ENCODE measurements at regions of chr1 and their contacts with region 1.

Region 1: GRCh38 chr1:42335050-42335808 is at the start of gene FOXJ3:
- DNase-seq: peak; percentile 87 to 89
- ATAC-seq: peak; percentile 92
- H3K4me3 ChIP-seq: peak within 1 kb of the TSS; percentile 74 to 91 (median 76)
- H3K27ac ChIP-seq: peak within 1 kb of the TSS; percentile 87 to 98 (median 98)
- H3K4me1 ChIP-seq: peaks cover 31 to 34% of the 10 kb centered on the region in 2 donors
- H3K27me3 ChIP-seq: no peaks in the 10 kb centered on the region
- CTCF ChIP-seq: peak in 1 of 5 experiments; percentile 22
- POLR2A ChIP-seq: peak; percentile 82 to 86
- total RNA-seq, gene FOXJ3: 39.4 to 81.0 (median 56.3) TPM

Region 2: GRCh38 chr1:41673378-41673777 is 661.9 kb before region 1 on chr1:
- in situ Hi-C with region 1: no loop called
- intact Hi-C with region 1: no loop called
- DNase-seq: no peak
- ATAC-seq: no peak
- H3K4me3 ChIP-seq: no peak overlapping the region
- H3K27ac ChIP-seq: no peak overlapping the region
- H3K4me1 ChIP-seq: peaks cover 0 to 10% of the 10 kb centered on the region in 2 donors
- H3K27me3 ChIP-seq: no peaks in the 10 kb centered on the region
- CTCF ChIP-seq: no peak
- POLR2A ChIP-seq: no peak

Region 3: DNA sequence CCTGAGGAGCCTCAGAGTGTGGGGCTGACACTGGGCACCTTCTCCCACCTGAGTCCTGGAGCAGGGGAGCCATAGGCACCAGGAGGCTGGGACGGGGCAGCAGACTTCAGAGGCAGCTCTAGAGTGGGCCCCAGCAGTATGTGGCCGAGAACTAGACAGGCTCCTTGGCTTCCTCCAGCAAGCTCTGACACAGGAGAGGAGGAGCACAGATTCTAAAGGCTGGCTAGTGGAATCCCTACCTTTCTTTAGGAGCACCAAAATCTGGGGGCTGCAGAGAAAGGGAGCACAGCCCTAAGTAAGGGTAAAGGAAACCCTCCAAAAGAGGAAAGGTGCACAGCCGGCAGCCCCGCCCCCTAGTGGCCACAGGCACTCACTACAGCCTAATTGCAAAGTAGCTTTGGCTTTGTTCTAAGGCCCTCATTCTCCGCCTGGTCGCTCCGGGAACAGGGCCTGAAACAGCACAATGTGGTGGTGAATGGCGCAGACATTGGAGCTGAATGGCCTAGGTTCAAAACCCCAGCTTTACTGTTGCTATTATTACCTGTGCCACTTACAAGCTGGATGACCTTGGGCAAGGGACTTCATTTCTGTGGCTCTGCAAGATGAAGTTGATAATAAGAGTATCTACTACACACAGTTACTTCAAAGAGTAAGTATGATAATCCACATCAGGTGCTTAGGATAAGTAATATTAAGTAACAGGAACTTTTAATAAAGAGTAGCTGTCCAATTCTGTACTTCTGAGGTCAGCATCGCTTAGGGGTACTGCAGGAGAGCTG is 161.9 kb before region 1 on chr1:
- in situ Hi-C with region 1: no loop called
- intact Hi-C with region 1: loop called (anchors 2 kb)
- DNase-seq: peak in 1 of 2 donors; percentile 47
- ATAC-seq: peak; percentile 51 to 79
- H3K4me3 ChIP-seq: no peak overlapping the region
- H3K27ac ChIP-seq: peak overlapping the region; percentile 2 to 60 (median 39)
- H3K4me1 ChIP-seq: peaks cover 13 to 18% of the 10 kb centered on the region in 2 donors
- H3K27me3 ChIP-seq: no peaks in the 10 kb centered on the region
- CTCF ChIP-seq: peak; percentile 76 to 97 (median 91)
- POLR2A ChIP-seq: no peak

Region 4: DNA sequence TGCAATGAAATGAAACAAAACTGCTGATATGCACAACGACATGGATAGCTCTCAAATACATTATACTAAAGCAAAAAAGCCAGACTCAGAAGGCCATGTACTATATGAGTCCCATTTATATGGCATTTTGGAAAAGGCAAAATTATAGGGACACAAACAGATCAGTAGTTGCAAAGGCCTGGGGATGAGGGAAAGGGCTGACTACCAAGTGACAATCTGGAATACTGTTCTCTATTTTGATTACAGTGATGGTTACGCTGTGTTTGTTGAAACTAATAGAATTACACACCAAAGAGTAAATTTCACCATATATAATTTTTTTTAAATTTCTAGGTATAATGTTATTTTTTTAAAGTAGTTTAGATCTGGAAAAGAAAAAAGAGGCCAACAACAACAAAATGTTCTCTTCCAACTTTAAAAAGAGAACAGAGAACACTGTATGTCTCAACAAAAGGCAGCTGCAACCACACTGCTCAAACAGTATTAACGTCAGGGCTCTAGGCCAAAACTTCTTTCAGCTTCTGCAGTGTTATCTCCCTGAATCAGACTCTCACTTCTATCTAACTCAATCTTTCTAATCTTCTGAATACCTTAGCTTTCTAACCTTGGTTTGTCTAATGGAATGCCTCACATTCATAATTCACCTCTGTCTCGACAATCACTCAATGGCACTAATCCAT is 76.0 kb before region 1 on chr1:
- in situ Hi-C with region 1: no loop called
- intact Hi-C with region 1: loop called (anchors 2 kb)
- DNase-seq: peak; percentile 38 to 53
- ATAC-seq: peak; percentile 97 to 98
- H3K4me3 ChIP-seq: peak overlapping the region in 1 of 4 donors; percentile 18
- H3K27ac ChIP-seq: peak overlapping the region; percentile 59 to 84 (median 70)
- H3K4me1 ChIP-seq: peaks cover 45 to 51% of the 10 kb centered on the region in 2 donors
- H3K27me3 ChIP-seq: no peaks in the 10 kb centered on the region
- CTCF ChIP-seq: no peak
- POLR2A ChIP-seq: no peak

Region 5: DNA sequence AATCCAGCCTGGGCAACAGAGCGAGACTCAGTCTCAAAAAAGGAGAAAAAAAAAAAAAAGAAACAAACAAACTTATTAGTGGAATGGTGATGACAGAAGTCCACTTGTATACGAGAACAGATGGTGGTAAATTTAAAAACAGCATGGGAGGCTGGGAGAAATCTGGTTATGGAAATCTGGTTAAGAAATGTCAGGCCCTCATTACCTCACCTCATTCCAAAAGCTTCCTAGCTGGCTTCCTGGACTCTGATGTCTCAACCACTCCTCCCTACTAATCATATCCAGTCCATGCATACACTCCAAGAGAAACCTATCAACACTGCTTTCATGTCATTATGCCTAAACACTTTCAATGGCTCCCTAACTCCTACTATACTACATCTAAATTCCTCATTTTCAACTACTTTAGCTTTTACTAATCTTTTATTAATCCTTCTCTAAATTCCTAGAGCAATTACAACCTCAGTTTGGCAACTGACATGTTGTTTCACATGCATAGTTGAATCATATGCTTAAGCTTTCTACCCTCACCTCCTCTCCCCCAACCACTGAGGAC is 53.1 kb before region 1 on chr1:
- in situ Hi-C with region 1: no loop called
- intact Hi-C with region 1: loop called (anchors 1 kb)
- DNase-seq: no peak
- ATAC-seq: peak; percentile 62 to 95
- H3K4me3 ChIP-seq: no peak overlapping the region
- H3K27ac ChIP-seq: peak overlapping the region in 2 of 4 donors; percentile 24 to 33
- H3K4me1 ChIP-seq: peaks cover 45 to 49% of the 10 kb centered on the region in 2 donors
- H3K27me3 ChIP-seq: no peaks in the 10 kb centered on the region
- CTCF ChIP-seq: no peak
- POLR2A ChIP-seq: no peak

Region 6: DNA sequence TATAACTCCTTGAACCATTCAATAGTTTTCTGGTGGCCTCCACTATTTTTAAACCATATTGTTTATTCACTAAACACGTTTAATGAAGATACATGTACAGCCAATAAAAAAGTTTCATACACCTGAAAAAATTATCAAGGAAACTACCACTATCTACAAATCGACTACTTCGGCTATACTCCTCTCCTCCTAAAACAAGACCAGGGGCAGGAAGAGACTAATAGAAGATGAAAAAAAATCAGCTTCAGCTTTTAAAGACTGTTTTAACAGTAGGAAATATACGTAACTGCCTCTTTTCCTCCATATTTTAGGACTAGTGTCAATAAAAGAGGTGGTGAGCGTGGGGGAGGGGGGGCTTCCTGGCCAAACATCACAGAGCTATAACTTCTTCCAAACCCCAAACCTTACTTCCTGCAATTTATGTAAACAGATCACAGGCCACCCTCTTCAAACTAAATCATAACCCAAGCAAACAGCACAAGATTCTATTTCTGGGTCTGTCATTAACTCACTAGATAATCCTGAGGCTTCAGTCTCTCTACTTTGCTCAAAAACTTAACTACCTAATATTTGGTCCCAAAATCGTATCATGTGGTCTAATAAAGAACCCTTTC is 15.3 kb before region 1 on chr1:
- in situ Hi-C with region 1: no loop called
- intact Hi-C with region 1: loop called (anchors 2 kb)
- DNase-seq: no peak
- ATAC-seq: peak; percentile 44 to 61
- H3K4me3 ChIP-seq: peak overlapping the region; percentile 14 to 40 (median 18)
- H3K27ac ChIP-seq: peak overlapping the region; percentile 75 to 87 (median 84)
- H3K4me1 ChIP-seq: peaks cover 83 to 86% of the 10 kb centered on the region in 2 donors
- H3K27me3 ChIP-seq: no peaks in the 10 kb centered on the region
- CTCF ChIP-seq: no peak
- POLR2A ChIP-seq: no peak

Region 7: DNA sequence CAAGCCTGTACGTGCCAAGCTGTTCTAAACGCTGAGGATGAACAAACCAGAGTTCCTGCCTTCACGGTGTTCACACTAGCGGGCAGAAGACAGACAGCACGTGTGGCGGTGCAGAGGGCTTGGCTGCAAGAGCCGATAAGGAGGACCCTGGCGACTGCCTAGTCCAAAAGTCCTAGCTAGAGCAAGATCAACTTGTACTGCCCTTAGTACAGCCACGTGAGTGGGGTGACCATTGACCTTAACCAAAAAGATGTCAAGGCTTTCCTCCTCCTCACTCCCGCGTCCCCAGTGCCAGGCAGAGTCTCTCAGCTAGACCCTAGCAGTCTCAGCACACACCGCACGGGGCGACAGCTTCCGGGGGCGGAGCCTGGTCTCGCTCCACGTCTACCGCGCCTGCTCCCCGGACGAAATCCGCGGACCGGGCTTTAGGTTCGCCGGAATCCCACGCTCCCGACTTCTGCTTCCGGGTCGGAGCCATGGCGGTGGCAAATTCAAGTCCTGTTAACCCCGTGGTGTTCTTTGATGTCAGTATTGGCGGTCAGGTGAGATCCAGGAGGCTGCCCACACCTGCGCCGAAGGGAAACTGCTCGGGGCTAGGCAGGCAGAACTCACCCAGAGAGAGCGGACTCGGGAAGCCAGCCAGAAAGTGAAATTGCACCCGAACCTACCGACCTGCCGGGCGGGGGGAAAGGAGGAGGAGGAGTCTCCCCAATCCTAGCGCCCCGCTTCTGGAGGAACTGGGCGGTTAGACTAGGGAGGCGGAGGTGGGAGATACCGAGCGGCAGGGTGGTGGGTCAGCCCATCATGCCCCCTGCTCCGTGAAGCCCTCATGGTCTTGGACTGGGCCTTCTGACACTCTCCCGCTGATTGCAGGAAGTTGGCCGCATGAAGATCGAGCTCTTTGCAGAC is 323.0 kb after region 1 on chr1 and contains the start of gene PPIH:
- in situ Hi-C with region 1: loop called in 1 of 4 experiments (anchors 25 kb)
- intact Hi-C with region 1: loop called (anchors 5 kb)
- DNase-seq: peak; percentile 86 to 91
- ATAC-seq: peak; percentile 98 to 99
- H3K4me3 ChIP-seq: peak within 1 kb of the TSS; percentile 80 to 94 (median 89)
- H3K27ac ChIP-seq: peak within 1 kb of the TSS; percentile 82 to 92 (median 89)
- H3K4me1 ChIP-seq: peaks cover 14 to 15% of the 10 kb centered on the region in 2 donors
- H3K27me3 ChIP-seq: no peaks in the 10 kb centered on the region
- CTCF ChIP-seq: peak in 4 of 5 experiments; percentile 31 to 56 (median 47)
- POLR2A ChIP-seq: peak; percentile 50 to 58
- total RNA-seq, gene PPIH: 6.1 to 13.6 (median 7.1) TPM

Region 8: GRCh38 chr1:42681741-42682483 is 346.7 kb after region 1 on chr1 and contains the start of gene YBX1:
- in situ Hi-C with region 1: no loop called
- intact Hi-C with region 1: loop called (anchors 2 kb)
- DNase-seq: peak; percentile 98 to 99
- ATAC-seq: peak; percentile 94 to 96
- H3K4me3 ChIP-seq: peak within 1 kb of the TSS; percentile 84 to 92 (median 86)
- H3K27ac ChIP-seq: peak within 1 kb of the TSS; percentile 97 to 98 (median 98)
- H3K4me1 ChIP-seq: peaks cover 43 to 44% of the 10 kb centered on the region in 2 donors
- H3K27me3 ChIP-seq: no peaks in the 10 kb centered on the region
- CTCF ChIP-seq: no peak
- POLR2A ChIP-seq: peak; percentile 89 to 95
- total RNA-seq, gene YBX1: 861 to 1,251 (median 1,022) TPM